ENCODE measurements at regions of chr12 and their contacts with region 1.

Region 1: DNA sequence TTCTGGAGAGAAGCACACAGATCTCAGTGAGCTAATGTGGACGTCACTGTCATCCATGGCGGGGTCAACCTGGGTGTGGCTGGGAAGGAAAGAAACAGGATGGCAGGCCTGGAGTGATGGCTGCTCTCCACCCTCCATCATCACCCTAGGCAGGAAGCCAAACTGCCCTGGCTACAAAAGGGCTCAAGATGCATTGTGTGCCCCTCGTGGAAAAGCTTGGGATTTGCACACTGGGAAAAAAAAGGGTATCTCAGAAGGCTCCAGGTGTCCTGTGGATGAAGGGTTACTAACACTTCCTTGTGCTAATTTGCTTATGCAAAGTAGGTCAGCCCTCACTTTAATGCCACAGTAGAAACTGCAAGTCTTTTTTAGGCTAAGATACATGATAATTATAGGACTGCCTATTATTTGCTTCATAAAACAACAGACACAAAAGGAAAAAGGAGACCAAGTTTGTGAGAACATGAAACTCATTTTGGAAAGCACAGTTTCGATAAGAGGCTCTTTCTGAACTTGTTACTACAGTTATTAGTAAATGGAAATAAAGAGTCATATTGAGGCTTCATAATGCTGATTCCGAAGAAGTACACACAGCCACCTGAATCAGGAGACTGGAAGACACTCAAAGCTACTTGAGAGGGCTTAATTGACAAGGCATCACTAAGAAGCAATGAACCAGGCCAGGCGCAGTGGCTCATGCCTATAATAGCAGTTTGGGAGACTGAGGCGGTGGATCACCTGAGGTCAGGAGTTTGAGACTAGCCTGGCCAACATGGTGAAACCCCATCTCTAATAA is 18.9 kb downstream of the RFC5 start:
- DNase-seq: no peak
- H3K4me3 ChIP-seq: no peak overlapping the region
- H3K27ac ChIP-seq: no peak overlapping the region
- H3K4me1 ChIP-seq: no peaks in the 10 kb centered on the region; a peak in 1 of 7 replicates
- H3K27me3 ChIP-seq: no peaks in the 10 kb centered on the region
- CTCF ChIP-seq: peak in 1 of 3 experiments; percentile 12; a peak in 1 of 4 replicates
- EP300 ChIP-seq: no peak
- POLR2A ChIP-seq: no peak
- RAD21 ChIP-seq: no peak

Region 2: GRCh38 chr12:117857632-117858612 is 177.5 kb before region 1 on chr12:
- CTCF ChIA-PET with region 1: interaction called, 22 read pairs
- POLR2A ChIA-PET with region 1: no interaction called
- DNase-seq: peak; percentile 49 to 87
- H3K4me3 ChIP-seq: no peak overlapping the region
- H3K27ac ChIP-seq: no peak overlapping the region
- H3K4me1 ChIP-seq: no peaks in the 10 kb centered on the region
- H3K27me3 ChIP-seq: no peaks in the 10 kb centered on the region
- CTCF ChIP-seq: peak; percentile 51 to 86 (median 52)
- EP300 ChIP-seq: no peak
- POLR2A ChIP-seq: no peak
- RAD21 ChIP-seq: peak in 1 of 2 experiments; percentile 41; a peak in 2 of 4 replicates

Region 3: DNA sequence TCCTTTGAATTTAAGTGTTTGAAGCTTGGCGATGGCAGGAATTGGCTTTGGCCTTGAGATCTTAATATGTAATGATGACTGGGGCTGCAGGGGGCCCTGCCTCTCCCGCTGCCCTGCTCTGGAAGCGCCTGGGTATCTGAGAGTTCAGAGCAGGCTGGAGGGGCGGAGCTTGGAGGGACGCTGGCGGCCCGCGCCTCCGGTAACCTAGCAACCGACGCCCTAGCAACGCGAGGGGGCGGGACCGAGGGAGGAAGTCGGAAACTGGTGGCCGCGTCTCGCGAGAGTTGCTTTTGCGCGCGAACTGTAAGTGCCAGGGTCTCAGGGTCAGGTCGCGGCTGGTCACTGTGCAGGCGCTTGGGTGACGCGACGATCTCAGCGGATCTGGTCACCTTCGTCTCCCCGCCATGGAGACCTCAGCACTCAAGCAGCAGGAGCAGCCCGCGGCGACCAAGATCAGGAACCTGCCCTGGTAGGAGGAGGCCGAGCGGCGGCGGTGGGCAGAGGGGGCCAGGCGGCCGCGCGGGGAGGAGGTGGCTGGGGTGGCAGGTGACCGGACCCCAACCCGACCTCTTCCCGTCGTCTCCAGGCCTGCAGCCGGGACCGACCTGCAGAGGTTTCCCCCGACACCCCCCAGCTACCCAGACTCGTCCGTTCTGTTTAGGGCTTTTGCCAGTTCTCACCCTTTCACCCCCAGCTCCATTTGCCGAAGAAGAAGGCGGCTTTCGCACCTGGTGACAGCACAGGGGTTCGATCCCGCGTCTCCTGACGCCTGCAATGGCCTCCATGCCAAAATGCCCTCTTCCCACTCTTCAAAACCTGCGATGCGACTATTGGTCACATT is 18.8 kb before region 1 on chr12 and contains the start of gene RFC5:
- CTCF ChIA-PET with region 1: interaction called, 8 read pairs
- POLR2A ChIA-PET with region 1: interaction called, 113 read pairs
- DNase-seq: peak; percentile 94 to 99
- H3K4me3 ChIP-seq: peak within 1 kb of the TSS; percentile 70 to 97 (median 90)
- H3K27ac ChIP-seq: peak within 1 kb of the TSS; percentile 78; the same call in 1 of the 2 replicates
- H3K4me1 ChIP-seq: no peaks in the 10 kb centered on the region; a peak in 1 of 7 replicates
- H3K27me3 ChIP-seq: no peaks in the 10 kb centered on the region
- CTCF ChIP-seq: no peak
- EP300 ChIP-seq: no peak
- POLR2A ChIP-seq: peak; percentile 47 to 91
- RAD21 ChIP-seq: peak in 1 of 2 experiments; percentile 29; a peak in 1 of 4 replicates
- total RNA-seq, gene RFC5: 34.4 and 35.5 TPM in 2 replicates

Region 4: DNA sequence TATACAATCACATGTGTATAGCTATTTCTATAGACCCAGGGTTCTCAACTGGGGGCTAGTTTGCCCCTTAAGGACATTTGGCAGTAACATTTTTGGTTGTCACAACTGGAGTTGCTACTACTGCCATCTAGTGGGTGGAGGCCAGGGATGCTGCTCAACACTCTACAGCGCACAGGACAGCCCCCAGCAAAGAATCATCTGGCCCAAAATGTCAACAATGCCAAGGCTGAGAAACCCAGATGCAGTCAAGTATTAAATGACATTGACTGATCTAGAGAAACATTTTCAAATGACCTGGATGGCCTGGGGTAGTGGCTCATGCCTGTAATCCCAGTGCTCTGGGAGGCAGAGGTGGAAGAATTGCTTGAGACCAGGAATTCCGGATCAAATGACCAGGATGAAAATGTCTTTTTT is 19.7 kb after region 1 on chr12:
- CTCF ChIA-PET with region 1: interaction called, 11 read pairs
- POLR2A ChIA-PET with region 1: interaction called, 30 read pairs
- DNase-seq: peak in 1 of 2 experiments; percentile 79
- H3K4me3 ChIP-seq: no peak overlapping the region
- H3K27ac ChIP-seq: no peak overlapping the region
- H3K4me1 ChIP-seq: peaks cover 0 to 1% (median 0%) of the 10 kb centered on the region in 4 experiments; a peak in 2 of 7 replicates
- H3K27me3 ChIP-seq: no peaks in the 10 kb centered on the region
- CTCF ChIP-seq: peak; percentile 71 to 82 (median 75)
- EP300 ChIP-seq: 0 out of 3 replicates have a peak, but pooled peaks of 1 of the 2 experiments have one; percentile 13
- POLR2A ChIP-seq: no peak
- RAD21 ChIP-seq: peak in 1 of 2 experiments; percentile 46; a peak in 3 of 4 replicates